CD4-positive, alpha-beta T cell (primary cell): ENCODE measurements at regions of chr17 and their contacts with region 1.

Region 1: DNA sequence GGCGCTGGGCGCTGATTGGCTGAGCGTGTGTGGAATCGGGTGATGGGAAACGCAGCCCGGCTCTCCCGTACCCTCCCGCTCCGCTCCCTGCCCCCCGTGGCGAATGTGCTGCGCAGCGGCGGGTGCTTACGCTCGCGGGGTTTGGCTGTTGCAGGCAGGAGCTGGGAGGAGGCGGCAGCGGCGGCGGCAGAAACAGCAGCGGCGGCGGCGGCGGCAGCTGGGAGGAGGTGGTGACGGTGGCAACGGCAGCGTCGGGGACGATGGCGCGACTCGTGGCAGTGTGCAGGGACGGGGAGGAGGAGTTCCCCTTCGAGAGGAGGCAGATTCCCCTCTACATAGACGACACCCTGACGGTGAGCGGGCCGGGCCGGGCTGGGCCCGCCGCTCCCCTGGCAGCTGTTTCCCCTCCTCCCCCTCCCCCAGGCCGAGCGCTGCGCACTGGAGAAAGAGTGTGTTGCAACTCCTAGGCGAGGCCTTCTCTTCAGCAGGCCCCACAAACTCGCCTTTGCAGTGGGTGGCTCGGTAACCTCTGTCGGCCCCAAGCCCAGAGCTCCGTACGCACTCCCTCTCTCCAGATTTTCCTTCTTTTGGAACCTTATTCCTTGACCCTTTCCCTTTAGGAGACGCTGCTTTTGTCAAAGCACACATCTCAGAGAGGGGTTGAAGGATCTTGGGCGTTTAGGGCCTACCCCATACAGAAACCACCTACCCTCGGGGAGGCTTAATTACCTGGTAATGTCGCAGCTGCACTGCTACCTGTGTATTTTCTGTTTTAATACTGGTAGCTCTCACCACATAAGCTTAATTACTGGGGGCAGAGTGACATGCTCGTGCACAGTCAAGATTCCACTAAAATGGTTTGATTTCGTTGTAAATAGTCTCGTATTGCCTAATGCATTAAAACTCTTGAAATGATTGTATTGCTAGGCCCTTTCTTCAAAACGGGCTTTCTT is 1.0 kb downstream of the GGNBP2 start:
- DNase-seq: peak; percentile 92 to 99 (median 96)
- ATAC-seq: peak; percentile 80
- H3K4me3 ChIP-seq: peak overlapping the region; percentile 99
- H3K4me3 Mint-ChIP-seq: peak overlapping the region; percentile 97
- H3K27ac ChIP-seq: peak overlapping the region; percentile 72 to 99
- H3K27ac Mint-ChIP-seq: peak overlapping the region; percentile 97
- H3K4me1 ChIP-seq: peaks cover 39% of the 10 kb centered on the region
- H3K4me1 Mint-ChIP-seq: peaks cover 53% of the 10 kb centered on the region
- H3K27me3 ChIP-seq: no peaks in the 10 kb centered on the region
- H3K27me3 Mint-ChIP-seq: no peaks in the 10 kb centered on the region
- CTCF ChIP-seq: no peak

Region 2: DNA sequence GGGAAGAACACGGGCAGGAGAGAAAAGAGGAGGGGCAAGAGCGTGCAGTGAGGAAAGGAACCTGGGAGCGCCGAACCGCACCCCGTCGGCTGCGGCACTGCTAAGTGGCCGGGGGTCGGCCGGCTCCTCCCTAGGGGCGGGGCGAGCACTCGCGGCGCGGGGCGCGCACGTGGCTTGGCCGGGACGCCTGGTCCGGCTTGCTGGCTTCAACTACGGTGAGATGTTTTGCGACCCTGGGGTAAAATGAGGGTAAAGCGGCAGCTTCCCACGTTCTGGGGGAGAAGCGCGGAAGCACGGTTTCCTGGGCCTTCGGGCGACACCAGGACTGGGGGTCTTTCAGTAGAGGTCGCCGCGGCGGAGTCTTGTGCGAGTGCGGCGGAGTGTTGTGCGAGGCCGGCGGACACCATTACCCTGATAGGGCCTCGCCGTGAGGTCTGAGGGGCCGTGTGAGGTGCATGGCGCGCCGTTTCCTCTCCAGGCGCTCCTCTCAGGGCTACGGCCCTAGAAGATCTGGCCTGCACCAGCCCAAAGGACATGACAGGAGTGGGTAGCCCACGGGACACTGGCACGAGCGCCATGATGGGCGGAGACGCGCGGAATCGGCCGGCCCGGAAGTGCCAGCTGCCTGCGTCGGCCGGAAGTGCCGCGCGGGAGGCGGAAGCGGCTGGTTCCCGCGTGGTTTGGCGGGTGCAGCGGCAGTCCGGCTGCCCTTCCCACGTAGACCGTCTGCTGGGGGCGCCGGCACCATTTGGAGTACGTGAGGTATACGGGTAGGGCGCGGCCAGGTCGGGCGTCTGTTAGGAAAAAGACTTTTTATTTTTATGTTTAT is 10.7 kb before region 1 on chr17 and contains the starts of genes MYO19 and PIGW:
- CTCF ChIA-PET with region 1: interaction called, 33 read pairs
- POLR2A ChIA-PET with region 1: interaction called, 145 read pairs
- intact Hi-C with region 1: loop called (anchors 1 kb)
- DNase-seq: peak; percentile 70 to 94 (median 80)
- ATAC-seq: peak; percentile 73
- H3K4me3 ChIP-seq: peak within 1 kb of the TSS; percentile 95
- H3K4me3 Mint-ChIP-seq: peak within 1 kb of the TSS; percentile 93
- H3K27ac ChIP-seq: peak within 1 kb of the TSS; percentile 95 to 97
- H3K27ac Mint-ChIP-seq: peak within 1 kb of the TSS; percentile 95
- H3K4me1 ChIP-seq: peaks cover 19% of the 10 kb centered on the region
- H3K4me1 Mint-ChIP-seq: peaks cover 25% of the 10 kb centered on the region
- H3K27me3 ChIP-seq: no peaks in the 10 kb centered on the region
- H3K27me3 Mint-ChIP-seq: no peaks in the 10 kb centered on the region
- CTCF ChIP-seq: no peak
- total RNA-seq, gene MYO19: 64.4 to 70.5 TPM
- total RNA-seq, gene PIGW: 3.3 to 3.4 TPM

Region 3: GRCh38 chr17:36566081-36566480 is 20.3 kb after region 1 on chr17:
- CTCF ChIA-PET with region 1: interaction called, 3 read pairs
- POLR2A ChIA-PET with region 1: interaction called, 16 read pairs
- intact Hi-C with region 1: loop called in 1 of 2 experiments (anchors 2 kb)
- DNase-seq: no peak
- ATAC-seq: no peak
- H3K4me3 ChIP-seq: no peak overlapping the region
- H3K4me3 Mint-ChIP-seq: no peak overlapping the region
- H3K27ac ChIP-seq: no peak overlapping the region
- H3K27ac Mint-ChIP-seq: no peak overlapping the region
- H3K4me1 ChIP-seq: no peaks in the 10 kb centered on the region
- H3K4me1 Mint-ChIP-seq: peaks cover 21% of the 10 kb centered on the region
- H3K27me3 ChIP-seq: no peaks in the 10 kb centered on the region
- H3K27me3 Mint-ChIP-seq: no peaks in the 10 kb centered on the region
- CTCF ChIP-seq: no peak

Region 4: GRCh38 chr17:36591434-36592315 is 45.9 kb after region 1 on chr17 and contains the start of gene DHRS11:
- CTCF ChIA-PET with region 1: interaction called, 3 read pairs
- POLR2A ChIA-PET with region 1: interaction called, 4 read pairs
- intact Hi-C with region 1: loop called (anchors 2 to 5 kb)
- DNase-seq: peak; percentile 48 to 83 (median 72)
- ATAC-seq: peak; percentile 88
- H3K4me3 ChIP-seq: peak within 1 kb of the TSS; percentile 61
- H3K4me3 Mint-ChIP-seq: peak within 1 kb of the TSS; percentile 87
- H3K27ac ChIP-seq: peak within 1 kb of the TSS in 1 of 2 donors; percentile 30
- H3K27ac Mint-ChIP-seq: peak within 1 kb of the TSS; percentile 67
- H3K4me1 ChIP-seq: peaks cover 18% of the 10 kb centered on the region
- H3K4me1 Mint-ChIP-seq: peaks cover 28% of the 10 kb centered on the region
- H3K27me3 ChIP-seq: no peaks in the 10 kb centered on the region
- H3K27me3 Mint-ChIP-seq: no peaks in the 10 kb centered on the region
- CTCF ChIP-seq: no peak
- total RNA-seq, gene DHRS11: 2.9 to 4.0 TPM

Region 5: GRCh38 chr17:36601303-36602029 is 55.7 kb after region 1 on chr17 and contains the start of gene MRM1:
- CTCF ChIA-PET with region 1: interaction called, 9 read pairs
- POLR2A ChIA-PET with region 1: interaction called, 56 read pairs
- intact Hi-C with region 1: loop called in 1 of 2 experiments (anchors 2 kb)
- DNase-seq: peak; percentile 80 to 94 (median 87)
- ATAC-seq: peak; percentile 74
- H3K4me3 ChIP-seq: peak within 1 kb of the TSS; percentile 89
- H3K4me3 Mint-ChIP-seq: peak within 1 kb of the TSS; percentile 97
- H3K27ac ChIP-seq: peak within 1 kb of the TSS; percentile 57 to 65
- H3K27ac Mint-ChIP-seq: peak within 1 kb of the TSS; percentile 94
- H3K4me1 ChIP-seq: peaks cover 31% of the 10 kb centered on the region
- H3K4me1 Mint-ChIP-seq: peaks cover 47% of the 10 kb centered on the region
- H3K27me3 ChIP-seq: no peaks in the 10 kb centered on the region
- H3K27me3 Mint-ChIP-seq: no peaks in the 10 kb centered on the region
- CTCF ChIP-seq: no peak
- total RNA-seq, gene MRM1: 0.81 to 1.1 TPM

Region 6: DNA sequence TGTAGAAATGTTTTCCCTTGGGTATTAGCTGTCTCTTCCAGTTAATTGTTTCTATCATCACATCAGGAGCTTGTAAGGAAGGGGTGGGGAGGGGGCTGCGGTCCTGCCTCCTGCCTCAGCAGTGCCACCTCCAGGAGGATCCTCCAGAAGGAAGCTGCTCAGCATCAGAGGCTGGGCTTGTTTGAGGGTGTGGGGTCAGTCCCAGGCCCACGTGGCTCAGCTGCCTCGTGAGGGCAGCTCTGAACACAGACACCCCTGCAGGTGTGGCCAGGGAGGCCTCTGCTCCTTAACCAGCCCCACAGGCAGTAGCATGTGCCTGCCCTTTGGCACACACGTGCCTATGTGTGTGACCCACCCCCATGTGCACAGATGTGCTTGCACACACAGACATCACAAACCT is 101.9 kb after region 1 on chr17:
- CTCF ChIA-PET with region 1: no interaction called
- POLR2A ChIA-PET with region 1: no interaction called
- intact Hi-C with region 1: no loop called
- DNase-seq: no peak
- ATAC-seq: no peak
- H3K4me3 ChIP-seq: no peak overlapping the region
- H3K4me3 Mint-ChIP-seq: no peak overlapping the region
- H3K27ac ChIP-seq: no peak overlapping the region
- H3K27ac Mint-ChIP-seq: no peak overlapping the region
- H3K4me1 ChIP-seq: peaks cover 2% of the 10 kb centered on the region
- H3K4me1 Mint-ChIP-seq: peaks cover 8% of the 10 kb centered on the region
- H3K27me3 ChIP-seq: peaks cover 26 to 29% of the 10 kb centered on the region in 2 experiments
- H3K27me3 Mint-ChIP-seq: peaks cover 81% of the 10 kb centered on the region
- CTCF ChIP-seq: no peak

Region 7: DNA sequence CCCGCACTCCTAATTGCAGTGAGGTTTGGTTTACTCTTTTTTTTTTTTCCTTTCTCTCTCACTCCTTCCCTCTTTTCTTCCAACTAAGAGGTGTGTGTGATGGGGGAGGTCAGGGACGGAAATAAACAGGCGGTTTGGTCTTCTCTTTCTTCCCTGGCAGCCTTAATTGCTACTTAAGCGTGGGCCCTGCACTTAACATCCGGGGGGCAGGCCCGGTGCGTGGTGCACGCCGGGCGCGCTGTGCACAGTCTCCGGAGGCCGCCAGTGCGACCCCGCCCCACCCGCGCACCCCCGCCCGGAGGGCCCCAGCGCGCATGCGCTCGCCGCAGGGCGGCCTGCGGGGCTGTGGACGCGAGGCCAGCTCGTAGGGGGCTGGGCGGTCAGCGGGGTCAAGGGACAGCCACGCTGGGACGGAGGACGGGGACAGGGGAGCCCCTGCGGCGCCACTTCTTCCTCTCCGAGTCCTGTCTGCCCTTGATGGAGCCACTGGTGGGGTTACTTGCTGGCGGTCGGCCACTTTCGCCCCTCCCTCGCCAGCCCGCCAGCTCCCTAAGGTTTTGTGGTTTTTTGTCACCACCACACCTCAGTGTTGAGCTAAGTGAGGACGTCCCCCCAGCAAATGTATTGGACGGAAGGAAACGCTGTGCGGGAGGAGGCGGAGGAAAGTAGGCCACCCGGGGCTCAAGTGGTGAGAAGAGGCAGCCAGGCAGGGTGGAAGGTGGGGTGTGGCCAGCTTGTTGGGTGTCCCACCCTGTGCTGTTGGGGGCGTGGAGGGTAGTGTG is 176.6 kb after region 1 on chr17:
- CTCF ChIA-PET with region 1: no interaction called
- POLR2A ChIA-PET with region 1: no interaction called
- intact Hi-C with region 1: loop called in 1 of 2 experiments (anchors 5 kb)
- DNase-seq: peak; percentile 62 to 89 (median 80)
- ATAC-seq: peak; percentile 97
- H3K4me3 ChIP-seq: peak overlapping the region; percentile 63
- H3K4me3 Mint-ChIP-seq: peak overlapping the region; percentile 87
- H3K27ac ChIP-seq: peak overlapping the region; percentile 73 to 75
- H3K27ac Mint-ChIP-seq: peak overlapping the region; percentile 97
- H3K4me1 ChIP-seq: peaks cover 44% of the 10 kb centered on the region
- H3K4me1 Mint-ChIP-seq: peaks cover 66% of the 10 kb centered on the region
- H3K27me3 ChIP-seq: no peaks in the 10 kb centered on the region
- H3K27me3 Mint-ChIP-seq: no peaks in the 10 kb centered on the region
- CTCF ChIP-seq: no peak

Region 8: GRCh38 chr17:36777118-36777517 is 231.4 kb after region 1 on chr17:
- CTCF ChIA-PET with region 1: no interaction called
- POLR2A ChIA-PET with region 1: no interaction called
- intact Hi-C with region 1: no loop called
- DNase-seq: no peak
- ATAC-seq: no peak
- H3K4me3 ChIP-seq: no peak overlapping the region
- H3K4me3 Mint-ChIP-seq: no peak overlapping the region
- H3K27ac ChIP-seq: no peak overlapping the region
- H3K27ac Mint-ChIP-seq: no peak overlapping the region
- H3K4me1 ChIP-seq: no peaks in the 10 kb centered on the region
- H3K4me1 Mint-ChIP-seq: no peaks in the 10 kb centered on the region
- H3K27me3 ChIP-seq: peaks cover 12 to 14% of the 10 kb centered on the region in 2 experiments
- H3K27me3 Mint-ChIP-seq: peaks cover 74% of the 10 kb centered on the region
- CTCF ChIP-seq: no peak